ENCODE measurements at regions of chr14 and their contacts with region 1.

Region 1: DNA sequence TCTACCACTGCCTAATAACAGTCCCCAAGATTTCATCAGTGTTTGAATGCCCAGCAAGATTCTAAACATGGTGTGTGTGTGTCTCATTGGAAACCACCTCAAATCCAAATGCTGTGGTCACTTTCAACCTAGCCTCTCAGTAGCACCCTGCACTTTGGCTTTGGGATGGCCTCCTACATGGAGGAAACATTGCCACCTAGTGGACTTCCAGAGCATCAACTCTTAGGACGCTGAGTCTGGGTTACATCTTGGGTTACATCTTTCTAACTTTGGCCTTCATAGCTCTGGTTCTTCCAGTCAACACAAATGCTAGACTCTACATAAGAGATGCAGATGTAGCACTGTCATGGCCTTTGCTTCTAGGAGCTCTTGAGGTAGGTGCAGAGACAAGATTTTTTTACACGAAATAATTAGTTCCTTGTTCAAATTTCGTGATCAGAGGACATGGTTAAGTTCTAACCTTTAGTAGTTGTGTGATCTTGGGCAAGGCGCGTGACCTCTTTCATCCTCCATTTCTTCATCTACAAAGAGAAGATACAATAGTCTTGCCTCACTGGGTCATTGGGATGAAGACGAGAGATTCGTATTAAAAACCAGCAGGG is 113.5 kb upstream of the VASH1 start:
- DNase-seq: peak; percentile 72
- H3K4me3 ChIP-seq: no peak overlapping the region
- H3K27ac ChIP-seq: no peak overlapping the region
- H3K4me1 ChIP-seq: peaks cover 12% of the 10 kb centered on the region
- H3K27me3 ChIP-seq: no peaks in the 10 kb centered on the region
- CTCF ChIP-seq: peak; percentile 89

Region 2: DNA sequence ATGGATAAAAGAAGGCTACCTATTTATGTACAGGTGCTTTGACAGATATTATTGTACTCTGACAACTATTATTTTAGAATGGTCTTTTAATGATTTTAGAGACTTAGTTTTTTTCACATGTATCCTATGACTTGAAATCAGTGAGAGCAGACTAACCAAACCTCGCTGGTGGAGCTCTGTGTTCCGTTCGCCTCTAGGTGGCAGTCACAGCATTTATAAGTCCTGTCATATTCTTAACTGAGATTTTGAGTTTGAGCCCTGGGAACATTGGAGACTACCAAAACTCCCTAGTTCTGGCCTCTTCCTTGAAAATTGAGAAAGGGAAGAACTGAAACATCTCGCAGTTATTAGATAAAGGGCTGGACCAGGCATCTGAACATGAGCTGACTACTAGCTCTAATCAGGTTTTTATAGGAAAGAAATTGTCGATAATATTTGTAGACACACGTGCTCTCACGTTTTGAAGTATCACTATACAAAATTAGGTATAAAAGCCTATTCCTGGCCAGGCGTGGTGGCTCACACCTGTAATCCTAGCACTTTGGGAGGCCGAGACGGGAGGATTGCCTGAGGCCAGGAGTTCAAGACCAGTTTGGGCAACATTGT is 938.5 kb before region 1 on chr14:
- CTCF ChIA-PET with region 1: no interaction called
- POLR2A ChIA-PET with region 1: no interaction called
- intact Hi-C with region 1: loop called (anchors 2 kb)
- DNase-seq: peak; percentile 80
- H3K4me3 ChIP-seq: no peak overlapping the region
- H3K27ac ChIP-seq: no peak overlapping the region
- H3K4me1 ChIP-seq: peaks cover 12% of the 10 kb centered on the region
- H3K27me3 ChIP-seq: no peaks in the 10 kb centered on the region
- CTCF ChIP-seq: peak; percentile 91

Region 3: DNA sequence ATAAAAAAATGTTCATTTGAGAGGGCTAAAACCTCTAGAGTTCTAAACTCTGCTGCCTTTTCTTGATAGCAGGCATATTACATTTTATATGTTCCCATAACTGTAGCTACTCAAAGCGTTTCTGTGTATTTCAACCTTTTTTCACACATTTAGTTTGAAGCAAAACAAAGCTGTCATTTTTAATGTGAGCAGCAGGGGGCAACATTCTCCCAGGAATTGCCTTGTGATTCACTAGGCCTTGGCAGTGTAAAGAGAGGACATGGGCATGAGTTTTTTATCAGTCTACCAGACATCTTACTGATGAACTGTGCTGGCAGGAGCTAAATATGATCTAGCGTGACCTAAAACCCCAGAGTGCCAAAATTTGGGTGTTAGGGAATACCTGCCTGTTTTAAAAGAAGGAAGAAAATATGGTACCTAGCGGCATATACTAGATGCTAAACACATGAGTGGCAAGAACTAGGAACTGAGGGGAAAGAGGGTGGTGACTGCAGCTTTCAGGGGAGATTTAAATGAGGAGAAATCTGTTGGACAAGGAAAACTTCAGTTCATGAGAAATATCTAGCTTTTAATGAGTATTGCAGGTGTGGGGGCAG is 596.9 kb before region 1 on chr14:
- CTCF ChIA-PET with region 1: interaction called, 3 read pairs
- POLR2A ChIA-PET with region 1: no interaction called
- intact Hi-C with region 1: loop called (anchors 1 kb)
- DNase-seq: peak; percentile 76
- H3K4me3 ChIP-seq: no peak overlapping the region
- H3K27ac ChIP-seq: no peak overlapping the region
- H3K4me1 ChIP-seq: no peaks in the 10 kb centered on the region
- H3K27me3 ChIP-seq: no peaks in the 10 kb centered on the region
- CTCF ChIP-seq: peak; percentile 82

Region 4: GRCh38 chr14:76109087-76109880 is 538.5 kb before region 1 on chr14:
- CTCF ChIA-PET with region 1: no interaction called
- POLR2A ChIA-PET with region 1: no interaction called
- intact Hi-C with region 1: no loop called
- DNase-seq: no peak
- H3K4me3 ChIP-seq: no peak overlapping the region
- H3K27ac ChIP-seq: no peak overlapping the region
- H3K4me1 ChIP-seq: no peaks in the 10 kb centered on the region
- H3K27me3 ChIP-seq: no peaks in the 10 kb centered on the region
- CTCF ChIP-seq: no peak

Region 5: GRCh38 chr14:76305268-76305826 is 342.5 kb before region 1 on chr14:
- CTCF ChIA-PET with region 1: no interaction called
- POLR2A ChIA-PET with region 1: no interaction called
- intact Hi-C with region 1: no loop called
- DNase-seq: no peak
- H3K4me3 ChIP-seq: no peak overlapping the region
- H3K27ac ChIP-seq: no peak overlapping the region
- H3K4me1 ChIP-seq: no peaks in the 10 kb centered on the region
- H3K27me3 ChIP-seq: peaks cover 84% of the 10 kb centered on the region
- CTCF ChIP-seq: no peak

Region 6: DNA sequence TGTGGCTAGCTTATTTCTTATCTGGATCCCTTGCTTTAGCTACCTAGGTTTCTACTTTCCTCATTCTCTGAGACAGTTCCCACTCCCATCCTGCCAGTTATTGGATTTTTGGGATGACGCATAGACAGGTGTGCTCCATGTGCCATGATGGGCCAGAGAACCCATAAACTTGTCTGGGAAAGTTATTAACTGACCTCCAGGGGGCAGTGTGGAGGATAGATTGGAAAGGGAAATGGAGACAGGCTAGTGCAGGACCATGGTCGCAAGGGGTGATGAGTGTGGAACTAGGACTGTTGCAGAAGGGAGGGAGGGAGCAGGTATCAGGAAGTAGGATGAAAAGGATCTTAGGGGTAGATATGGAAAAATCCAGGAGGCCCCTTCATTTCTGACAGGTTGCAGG is 191.6 kb before region 1 on chr14:
- CTCF ChIA-PET with region 1: interaction called, 3 read pairs
- POLR2A ChIA-PET with region 1: no interaction called
- intact Hi-C with region 1: loop called (anchors 5 kb)
- DNase-seq: peak; percentile 65
- H3K4me3 ChIP-seq: no peak overlapping the region
- H3K27ac ChIP-seq: no peak overlapping the region
- H3K4me1 ChIP-seq: no peaks in the 10 kb centered on the region
- H3K27me3 ChIP-seq: no peaks in the 10 kb centered on the region
- CTCF ChIP-seq: peak; percentile 73

Region 7: GRCh38 chr14:76514613-76515012 is 133.2 kb before region 1 on chr14:
- CTCF ChIA-PET with region 1: no interaction called
- POLR2A ChIA-PET with region 1: no interaction called
- intact Hi-C with region 1: loop called (anchors 2 kb)
- DNase-seq: peak; percentile 89
- H3K4me3 ChIP-seq: no peak overlapping the region
- H3K27ac ChIP-seq: peak overlapping the region; percentile 64
- H3K4me1 ChIP-seq: peaks cover 52% of the 10 kb centered on the region
- H3K27me3 ChIP-seq: no peaks in the 10 kb centered on the region
- CTCF ChIP-seq: peak; percentile 75

Region 8: DNA sequence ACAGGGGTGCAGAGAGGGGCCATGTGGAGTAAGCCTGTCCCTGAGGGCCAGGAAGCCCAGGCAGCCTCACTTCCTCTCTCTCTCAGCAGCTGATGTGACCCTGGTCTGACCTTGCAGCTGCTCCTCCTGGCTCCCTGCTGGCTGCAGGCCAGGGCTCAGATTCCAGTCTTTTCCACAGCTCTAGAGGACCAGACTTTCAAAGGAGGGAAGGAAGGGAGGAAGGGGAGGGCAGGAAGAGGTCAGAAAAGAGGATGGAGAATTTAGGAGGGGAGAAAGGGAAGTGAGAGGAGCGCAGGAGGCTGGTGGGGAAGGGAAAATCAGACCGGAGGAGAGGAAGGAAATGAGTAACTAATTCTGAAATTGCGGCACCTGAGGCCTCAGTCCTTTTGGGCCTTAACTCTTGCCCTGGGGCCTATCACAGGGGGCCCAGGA is 72.6 kb after region 1 on chr14:
- CTCF ChIA-PET with region 1: no interaction called
- POLR2A ChIA-PET with region 1: no interaction called
- intact Hi-C with region 1: no loop called
- DNase-seq: no peak
- H3K4me3 ChIP-seq: no peak overlapping the region
- H3K27ac ChIP-seq: no peak overlapping the region
- H3K4me1 ChIP-seq: peaks cover 9% of the 10 kb centered on the region
- H3K27me3 ChIP-seq: peaks cover 7% of the 10 kb centered on the region
- CTCF ChIP-seq: no peak

Region 9: DNA sequence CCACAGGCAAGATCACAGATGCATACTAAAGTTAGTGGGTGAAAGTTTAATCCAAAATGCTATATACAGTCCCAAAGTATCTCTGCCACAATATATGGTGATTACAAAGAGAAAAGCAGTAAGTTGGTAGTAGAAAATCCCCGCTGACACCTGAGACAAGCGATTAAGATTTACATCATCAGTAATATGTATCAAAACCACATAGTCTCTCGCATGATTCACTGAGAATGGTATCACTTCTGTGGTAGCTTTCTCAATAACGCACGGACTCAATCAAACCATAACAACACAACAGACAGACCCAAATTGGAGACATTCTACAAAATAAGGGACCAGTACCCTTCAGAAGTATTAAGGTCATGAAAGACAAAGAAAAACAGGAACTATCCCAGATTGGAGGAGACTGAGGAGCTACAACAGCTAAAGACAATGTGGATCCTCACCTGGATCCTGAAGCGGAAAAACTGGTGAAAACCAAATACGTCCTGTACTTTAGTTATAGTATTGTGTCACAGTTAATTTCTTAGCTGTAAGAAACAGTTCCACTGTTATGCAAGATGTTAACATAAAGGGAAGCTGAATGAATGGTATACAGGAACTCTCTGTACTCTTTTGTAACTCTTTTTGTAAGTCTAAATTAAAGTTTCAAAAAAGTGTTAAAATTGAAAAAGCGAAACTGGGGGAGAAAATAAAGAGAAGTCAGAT is 917.6 kb after region 1 on chr14:
- CTCF ChIA-PET with region 1: no interaction called
- POLR2A ChIA-PET with region 1: no interaction called
- intact Hi-C with region 1: no loop called
- DNase-seq: no peak
- H3K4me3 ChIP-seq: no peak overlapping the region
- H3K27ac ChIP-seq: no peak overlapping the region
- H3K4me1 ChIP-seq: no peaks in the 10 kb centered on the region
- H3K27me3 ChIP-seq: no peaks in the 10 kb centered on the region
- CTCF ChIP-seq: no peak

Measured in A673 (cell line).